ENCODE measurements at regions of chr5 and their contacts with region 1.

Region 1: GRCh38 chr5:179060116-179061008 is at the start of gene ZNF354C:
- DNase-seq: peak; percentile 94 to 97 (median 97)
- ATAC-seq: peak; percentile 99 to 100
- H3K4me3 ChIP-seq: peak within 1 kb of the TSS; percentile 80
- H3K27ac ChIP-seq: peak within 1 kb of the TSS; percentile 49
- H3K4me1 ChIP-seq: peaks cover 10% of the 10 kb centered on the region
- H3K27me3 ChIP-seq: no peaks in the 10 kb centered on the region
- total RNA-seq, gene ZNF354C: 5.0 to 6.2 (median 5.6) TPM

Region 2: GRCh38 chr5:178732281-178732680 is 328.1 kb before region 1 on chr5:
- intact Hi-C with region 1: loop called in 1 of 4 experiments (anchors 5 kb)
- DNase-seq: no peak
- ATAC-seq: no peak
- H3K4me3 ChIP-seq: no peak overlapping the region
- H3K27ac ChIP-seq: no peak overlapping the region
- H3K4me1 ChIP-seq: no peaks in the 10 kb centered on the region
- H3K27me3 ChIP-seq: no peaks in the 10 kb centered on the region

Region 3: DNA sequence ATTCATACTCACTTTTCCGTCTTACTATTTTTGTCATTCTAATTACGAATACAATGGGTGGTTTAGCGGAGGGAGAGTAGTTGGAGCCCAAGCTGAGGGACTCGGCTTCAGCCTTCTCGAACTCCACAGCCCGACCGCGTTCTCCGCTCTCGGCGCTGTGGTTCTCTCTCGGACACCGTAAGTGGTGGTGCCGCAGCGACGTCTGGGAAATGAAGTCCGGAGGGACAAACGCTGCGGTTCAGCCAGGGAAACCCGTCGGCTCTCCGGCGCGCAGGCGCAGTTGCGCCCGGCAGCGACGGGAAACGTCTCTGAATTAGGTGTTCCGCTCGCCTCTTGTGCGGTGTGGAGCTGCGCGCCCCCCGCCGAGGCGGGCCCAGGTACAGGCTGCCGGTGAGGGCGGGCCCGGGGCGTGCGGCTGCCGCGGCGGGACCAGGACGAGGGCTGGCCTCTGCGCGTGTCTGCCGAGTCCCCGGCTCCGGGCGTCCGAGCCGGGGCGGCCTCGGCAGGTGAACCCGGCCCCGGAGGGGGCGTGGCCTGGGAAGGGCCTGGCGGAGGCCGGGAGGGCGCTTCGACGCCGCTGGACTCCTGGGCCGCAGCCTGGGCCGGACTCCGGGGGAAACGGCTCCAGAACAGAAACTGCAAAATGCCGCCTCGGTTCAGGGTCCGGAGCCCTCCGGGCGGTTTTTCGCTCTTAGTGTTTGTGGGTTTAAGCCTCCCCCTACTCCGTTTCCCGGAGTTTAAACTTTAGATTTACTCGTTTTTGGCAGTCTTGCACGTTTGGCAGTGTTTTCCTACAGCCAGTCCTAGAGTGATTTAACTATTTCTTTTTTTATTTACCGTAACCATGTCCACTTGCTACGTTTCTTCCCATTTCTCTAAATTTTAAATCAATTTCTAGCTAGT is 36.6 kb before region 1 on chr5 and contains the start of gene ZNF879:
- intact Hi-C with region 1: loop called in 1 of 4 experiments (anchors 5 kb)
- DNase-seq: peak; percentile 95 to 98 (median 97)
- ATAC-seq: peak; percentile 98 to 99
- H3K4me3 ChIP-seq: peak within 1 kb of the TSS; percentile 84
- H3K27ac ChIP-seq: peak within 1 kb of the TSS; percentile 85
- H3K4me1 ChIP-seq: peaks cover 4% of the 10 kb centered on the region
- H3K27me3 ChIP-seq: no peaks in the 10 kb centered on the region
- total RNA-seq, gene ZNF879: 4.1 to 6.2 (median 5.4) TPM

Measured in right cardiac atrium (tissue), 5 donors.